Vagina (tissue), 2 donors: ENCODE measurements at regions of chr9 and their contacts with region 1.

Region 1: DNA sequence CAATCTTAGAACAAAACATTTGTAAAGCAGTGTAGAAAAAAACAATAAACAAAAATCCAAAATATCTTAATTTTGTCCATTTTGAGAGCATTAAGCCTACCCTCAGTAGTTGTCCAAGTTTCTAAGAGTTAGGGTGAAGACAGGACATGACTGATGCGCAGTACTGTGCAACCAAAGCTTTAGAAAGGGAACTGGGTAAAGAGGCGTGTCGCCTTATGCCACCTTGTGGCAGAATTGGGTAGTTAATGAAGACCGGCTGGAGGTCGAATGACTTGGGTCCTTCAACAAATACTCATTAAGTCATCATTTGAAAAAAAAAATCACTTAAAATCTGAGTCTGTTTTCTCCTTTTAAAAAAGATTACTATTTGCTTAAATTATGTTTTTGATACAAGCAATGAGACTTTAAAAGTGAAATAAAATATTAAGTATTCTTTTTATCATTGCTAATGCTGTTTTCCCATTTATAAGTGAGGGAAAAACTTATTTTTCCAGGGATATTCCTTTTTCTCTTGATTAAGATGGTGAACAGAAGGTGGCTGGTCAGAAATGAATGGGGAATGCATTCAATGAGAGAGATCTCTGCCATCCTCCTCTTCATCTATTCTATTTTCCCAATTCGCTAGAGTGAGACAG is 3.5 kb upstream of the RNF20 start:
- DNase-seq: no peak
- H3K4me3 ChIP-seq: no peak overlapping the region
- H3K27ac ChIP-seq: no peak overlapping the region
- H3K4me1 ChIP-seq: peaks cover 17% of the 10 kb centered on the region
- H3K27me3 ChIP-seq: no peaks in the 10 kb centered on the region
- CTCF ChIP-seq: peak; percentile 75 to 81 (median 79)
- POLR2A ChIP-seq: no peak

Region 2: DNA sequence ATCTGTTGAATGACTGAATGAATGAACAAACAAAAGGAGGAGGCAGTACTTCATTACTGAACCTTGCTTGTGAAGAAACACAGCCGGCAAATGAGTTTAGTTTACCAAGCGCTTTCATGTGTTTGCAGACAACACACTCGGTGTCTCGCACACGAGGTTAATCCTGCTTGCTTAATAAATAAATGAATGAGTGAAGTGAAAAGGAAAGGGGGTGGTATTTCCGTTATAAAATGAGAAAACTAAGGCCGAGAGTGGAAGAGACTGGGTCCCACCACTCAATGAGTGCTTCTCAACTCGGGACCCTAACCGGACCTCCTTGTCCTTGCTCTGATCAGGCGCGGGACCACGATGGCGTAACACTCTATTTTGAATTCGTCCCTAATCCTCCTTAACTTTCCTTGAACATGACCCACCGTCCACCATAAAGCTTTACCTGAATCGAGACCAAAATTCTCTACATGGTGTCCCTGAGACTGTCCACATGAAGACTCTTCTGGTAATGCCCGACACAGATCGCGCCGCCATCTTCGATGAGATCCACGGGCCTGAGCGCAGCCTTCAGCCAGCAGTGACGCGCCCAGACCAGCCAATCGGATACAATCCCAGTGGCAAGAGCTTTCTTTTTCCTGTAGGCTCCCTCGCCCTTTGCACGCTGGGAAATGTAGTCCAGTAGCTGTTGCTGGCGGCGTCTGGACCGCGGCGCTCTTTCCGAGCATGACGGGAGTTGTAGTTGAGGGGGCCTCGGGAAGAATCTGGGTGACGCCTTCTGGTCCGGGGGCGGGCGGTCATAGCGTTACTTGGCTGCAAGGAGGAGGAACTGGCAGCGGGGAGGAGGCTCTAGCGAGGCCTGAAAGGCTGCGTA is 131.9 kb before region 1 on chr9 and contains the starts of genes MRPL50 and ZNF189:
- intact Hi-C with region 1: loop called (anchors 10 kb)
- DNase-seq: peak; percentile 99 to 100
- H3K4me3 ChIP-seq: peak within 1 kb of the TSS; percentile 78 to 88
- H3K27ac ChIP-seq: peak within 1 kb of the TSS; percentile 87
- H3K4me1 ChIP-seq: peaks cover 45% of the 10 kb centered on the region
- H3K27me3 ChIP-seq: no peaks in the 10 kb centered on the region
- CTCF ChIP-seq: peak in 1 of 3 experiments; percentile 30
- POLR2A ChIP-seq: peak; percentile 61 to 73
- total RNA-seq, gene MRPL50: 8.8 TPM
- total RNA-seq, gene ZNF189: 12.5 TPM

Region 3: DNA sequence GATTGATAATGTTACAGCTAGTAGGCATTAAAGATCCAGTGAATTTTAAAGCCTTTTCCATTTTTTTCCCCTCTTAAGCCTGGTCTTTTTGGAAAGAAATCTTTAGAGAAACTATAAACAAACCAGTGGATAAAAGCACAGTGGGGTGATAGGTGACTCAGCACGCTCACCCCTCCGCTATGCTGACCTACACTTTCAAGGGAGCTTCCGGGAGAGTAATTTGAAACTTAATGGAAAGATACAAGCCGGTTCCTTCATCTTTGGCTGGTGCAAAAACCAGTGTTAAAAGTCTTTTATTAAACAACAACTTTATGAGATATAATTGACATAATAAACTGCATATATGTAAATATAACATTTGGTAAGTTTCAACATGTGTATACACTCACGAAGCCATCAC is 67.6 kb before region 1 on chr9:
- intact Hi-C with region 1: loop called (anchors 5 kb)
- DNase-seq: no peak
- H3K4me3 ChIP-seq: no peak overlapping the region
- H3K27ac ChIP-seq: no peak overlapping the region
- H3K4me1 ChIP-seq: no peaks in the 10 kb centered on the region
- H3K27me3 ChIP-seq: no peaks in the 10 kb centered on the region
- CTCF ChIP-seq: no peak
- POLR2A ChIP-seq: no peak

Region 4: GRCh38 chr9:101691657-101692056 is 161.5 kb after region 1 on chr9:
- intact Hi-C with region 1: no loop called
- DNase-seq: no peak
- H3K4me3 ChIP-seq: no peak overlapping the region
- H3K27ac ChIP-seq: no peak overlapping the region
- H3K4me1 ChIP-seq: no peaks in the 10 kb centered on the region
- H3K27me3 ChIP-seq: no peaks in the 10 kb centered on the region
- CTCF ChIP-seq: no peak
- POLR2A ChIP-seq: no peak